Mammary epithelial cell (primary cell): ENCODE measurements at regions of chr9 and their contacts with region 1.

Region 1: GRCh38 chr9:136719212-136719880 is 7.0 kb downstream of the DIPK1B start:
- DNase-seq: no peak
- H3K4me3 ChIP-seq: no peak overlapping the region
- H3K27ac ChIP-seq: no peak overlapping the region
- H3K4me1 ChIP-seq: peaks cover 7% of the 10 kb centered on the region
- H3K27me3 ChIP-seq: no peaks in the 10 kb centered on the region
- CTCF ChIP-seq: no peak

Region 2: DNA sequence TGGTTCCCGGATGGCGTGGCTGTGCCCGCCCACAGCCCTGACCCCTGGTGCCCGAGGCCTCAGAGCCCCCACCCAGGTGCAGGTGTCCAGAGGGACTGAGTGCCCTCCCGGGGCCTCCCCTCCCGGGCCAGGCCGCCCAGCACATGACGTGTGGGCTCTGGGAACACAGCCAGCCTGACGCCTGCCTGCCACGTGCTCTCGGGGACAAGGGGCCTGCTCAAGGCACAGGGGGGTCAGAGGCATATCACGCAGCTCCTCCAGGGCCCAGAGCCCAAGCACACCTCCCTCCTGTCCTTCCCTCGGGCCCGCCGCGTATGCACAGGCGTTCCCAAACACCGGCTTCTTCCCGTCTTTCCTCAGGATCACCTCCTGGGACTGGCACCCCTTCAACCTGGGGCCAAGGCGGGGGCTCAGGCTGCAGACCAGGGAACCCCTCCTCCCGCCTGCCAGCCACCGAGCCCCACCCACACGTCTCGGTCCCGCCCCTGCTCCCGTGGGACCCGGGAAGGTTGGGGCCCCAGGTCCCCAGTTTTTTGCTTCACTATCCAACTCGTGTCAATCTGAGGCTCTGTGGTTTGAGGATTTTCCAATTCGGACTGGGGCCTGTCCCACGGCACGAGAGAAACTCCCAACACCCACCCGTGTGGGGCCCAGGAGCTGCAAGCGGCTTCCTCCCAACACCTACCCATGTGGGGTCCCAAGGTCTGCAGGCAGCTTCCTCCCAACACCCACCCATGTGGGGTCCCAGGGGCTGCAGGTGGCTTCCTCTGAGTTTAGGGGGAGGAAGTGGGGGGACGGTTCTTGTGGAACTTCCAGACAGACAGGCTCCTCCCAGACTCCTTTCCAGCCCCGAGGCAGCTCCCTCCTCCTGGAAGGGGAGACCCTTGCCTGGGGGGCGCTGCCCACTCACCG is 21.9 kb after region 1 on chr9:
- CTCF ChIA-PET with region 1: interaction called, 10 read pairs
- dilution Hi-C with region 1: no loop called
- in situ Hi-C with region 1: no loop called
- intact Hi-C with region 1: no loop called
- DNase-seq: no peak
- H3K4me3 ChIP-seq: no peak overlapping the region
- H3K27ac ChIP-seq: no peak overlapping the region
- H3K4me1 ChIP-seq: peaks cover 9% of the 10 kb centered on the region
- H3K27me3 ChIP-seq: peaks cover 18% of the 10 kb centered on the region
- CTCF ChIP-seq: no peak